Lower lobe of right lung (tissue), 2 donors: ENCODE measurements at regions of chrX and their contacts with region 1.

Region 1: DNA sequence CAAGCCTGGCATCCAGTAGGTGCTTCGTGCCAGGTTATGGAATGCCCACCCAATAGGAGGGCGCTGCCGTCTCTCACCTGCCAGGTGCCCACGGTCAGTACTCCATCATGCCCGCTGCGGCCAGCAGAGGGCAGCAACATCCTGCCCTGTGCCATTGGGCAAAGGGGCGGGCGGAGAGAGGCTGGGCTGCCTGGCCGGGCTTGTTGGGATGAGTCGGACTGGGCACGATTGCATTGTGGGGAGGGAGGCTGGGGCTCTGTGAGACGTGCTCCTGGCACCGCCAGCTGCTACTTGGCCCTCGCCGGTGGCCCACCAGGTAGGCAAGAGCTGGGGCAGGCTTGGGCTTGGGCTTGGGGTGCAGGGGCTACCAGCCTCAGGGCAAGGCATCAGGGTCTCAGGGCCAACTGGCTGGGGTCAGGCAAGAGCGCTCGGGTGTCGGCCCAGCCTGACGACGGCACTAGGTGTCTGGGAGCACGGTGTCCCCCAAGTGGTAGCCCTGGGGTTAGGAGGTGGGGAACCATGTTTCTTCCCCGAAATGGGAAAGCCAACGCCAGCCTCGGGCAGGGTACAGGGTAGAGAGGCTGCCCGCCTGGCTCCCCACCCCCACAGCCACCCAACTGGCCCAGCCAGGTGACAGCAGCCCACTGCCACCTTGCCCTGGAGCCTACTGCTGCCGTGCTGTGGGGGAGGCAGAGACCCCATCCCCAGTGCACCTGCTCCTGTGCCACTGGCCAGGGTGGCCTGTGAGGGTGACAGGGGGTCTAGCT is at the start of gene PLXNB3:
- DNase-seq: peak; percentile 86
- ATAC-seq: peak; percentile 92
- H3K4me3 ChIP-seq: peak within 1 kb of the TSS; percentile 21
- H3K27ac ChIP-seq: peak within 1 kb of the TSS; percentile 53
- H3K4me1 ChIP-seq: no peaks in the 10 kb centered on the region
- H3K27me3 ChIP-seq: no peaks in the 10 kb centered on the region
- CTCF ChIP-seq: peak; percentile 83
- total RNA-seq, gene PLXNB3: 4.6 TPM

Region 2: DNA sequence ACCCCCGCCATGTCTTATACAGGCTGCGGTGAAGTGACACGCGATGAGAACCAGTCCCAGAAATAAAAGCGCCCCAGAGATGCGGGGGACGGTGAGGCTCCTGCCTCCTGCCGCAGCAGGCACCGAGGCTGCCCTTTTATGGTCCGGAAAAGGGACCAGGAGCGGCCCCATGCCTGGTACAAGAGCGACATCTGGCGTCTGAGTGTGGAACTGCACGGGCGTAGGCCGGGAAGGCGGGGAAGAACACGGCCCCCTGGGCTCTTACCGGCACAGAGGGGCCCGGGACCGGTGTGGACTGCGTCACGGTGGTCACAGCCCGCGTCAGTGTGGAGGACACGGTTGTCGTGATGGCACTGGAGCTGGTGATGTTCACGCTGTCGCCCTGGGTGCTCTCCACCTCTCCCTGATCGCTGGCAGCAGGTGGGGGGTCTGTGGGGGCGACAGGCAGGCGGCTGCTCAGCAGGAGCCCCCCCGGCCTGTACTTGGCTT is 189.2 kb after region 1 on chrX:
- intact Hi-C with region 1: loop called (anchors 10 kb)
- DNase-seq: peak; percentile 70
- ATAC-seq: peak; percentile 73 to 83
- H3K4me3 ChIP-seq: no peak overlapping the region
- H3K27ac ChIP-seq: peak overlapping the region; percentile 36
- H3K4me1 ChIP-seq: peaks cover 5% of the 10 kb centered on the region
- H3K27me3 ChIP-seq: no peaks in the 10 kb centered on the region
- CTCF ChIP-seq: peak; percentile 88